ENCODE measurements at regions of chr10 and their contacts with region 1.

Region 1: GRCh38 chr10:122051251-122051996 is 62.5 kb downstream of the TACC2 start:
- DNase-seq: peak in 2 of 3 donors; percentile 32 to 63
- ATAC-seq: peak; percentile 50 to 66 (median 62)
- H3K4me3 ChIP-seq: no peak overlapping the region
- H3K27ac ChIP-seq: no peak overlapping the region
- H3K4me1 ChIP-seq: no peaks in the 10 kb centered on the region
- H3K27me3 ChIP-seq: no peaks in the 10 kb centered on the region
- CTCF ChIP-seq: peak; percentile 41 to 71 (median 66)
- POLR2A ChIP-seq: no peak

Region 2: DNA sequence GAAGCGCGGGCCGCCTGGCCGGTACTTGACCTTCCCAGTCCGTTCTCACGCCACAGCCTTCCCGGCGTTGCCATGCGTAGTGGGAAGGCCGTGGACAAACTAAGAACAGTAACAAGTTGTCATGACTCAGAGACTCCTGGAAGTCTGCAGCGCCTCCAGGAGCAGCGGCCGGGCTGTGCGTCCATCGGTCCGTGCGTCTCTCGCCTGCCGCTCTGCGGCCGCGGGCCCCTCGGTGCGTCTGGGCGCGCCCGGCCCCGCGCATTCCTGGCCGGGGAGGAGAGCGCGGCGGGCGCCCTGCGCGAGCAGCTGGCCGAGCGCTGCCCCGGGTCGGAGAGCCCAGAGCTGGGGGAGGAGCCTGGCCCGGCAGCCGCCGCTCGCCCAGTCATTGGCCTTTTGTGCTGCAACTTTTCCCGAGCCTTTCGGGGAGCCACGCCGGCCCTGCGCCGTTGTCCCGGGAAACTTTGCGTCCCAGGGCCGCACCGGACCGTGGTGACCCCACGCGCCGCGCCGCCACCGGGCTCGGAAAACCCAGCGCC is 61.3 kb after region 1 on chr10:
- intact Hi-C with region 1: loop called (anchors 10 kb)
- DNase-seq: peak; percentile 85 to 86 (median 86)
- ATAC-seq: peak; percentile 83 to 94 (median 92)
- H3K4me3 ChIP-seq: peak overlapping the region; percentile 76 to 87 (median 80)
- H3K27ac ChIP-seq: peak overlapping the region; percentile 97 to 98 (median 98)
- H3K4me1 ChIP-seq: peaks cover 0 to 11% (median 0%) of the 10 kb centered on the region in 4 donors
- H3K27me3 ChIP-seq: no peaks in the 10 kb centered on the region
- CTCF ChIP-seq: peak; percentile 44 to 60 (median 48)
- POLR2A ChIP-seq: peak; percentile 76

Region 3: GRCh38 chr10:122239578-122240257 is 188.3 kb after region 1 on chr10:
- intact Hi-C with region 1: no loop called
- DNase-seq: no peak
- ATAC-seq: no peak
- H3K4me3 ChIP-seq: no peak overlapping the region
- H3K27ac ChIP-seq: no peak overlapping the region
- H3K4me1 ChIP-seq: no peaks in the 10 kb centered on the region
- H3K27me3 ChIP-seq: no peaks in the 10 kb centered on the region
- CTCF ChIP-seq: no peak
- POLR2A ChIP-seq: no peak

Region 4: GRCh38 chr10:122786269-122786668 is 734.8 kb after region 1 on chr10:
- intact Hi-C with region 1: no loop called
- DNase-seq: no peak
- ATAC-seq: no peak
- H3K4me3 ChIP-seq: no peak overlapping the region
- H3K27ac ChIP-seq: no peak overlapping the region
- H3K4me1 ChIP-seq: no peaks in the 10 kb centered on the region
- H3K27me3 ChIP-seq: no peaks in the 10 kb centered on the region
- CTCF ChIP-seq: no peak
- POLR2A ChIP-seq: no peak